ENCODE measurements at regions of chr20 and their contacts with region 1.

Region 1: GRCh38 chr20:18632196-18633009 is 44.5 kb downstream of the DTD1 start:
- DNase-seq: peak; percentile 9 to 38
- ATAC-seq: peak; percentile 66 to 75
- H3K4me3 ChIP-seq: no peak overlapping the region
- H3K27ac ChIP-seq: no peak overlapping the region
- H3K4me1 ChIP-seq: peaks cover 0 to 3% of the 10 kb centered on the region in 2 donors
- H3K27me3 ChIP-seq: no peaks in the 10 kb centered on the region
- CTCF ChIP-seq: peak; percentile 64 to 87 (median 73)
- POLR2A ChIP-seq: no peak

Region 2: DNA sequence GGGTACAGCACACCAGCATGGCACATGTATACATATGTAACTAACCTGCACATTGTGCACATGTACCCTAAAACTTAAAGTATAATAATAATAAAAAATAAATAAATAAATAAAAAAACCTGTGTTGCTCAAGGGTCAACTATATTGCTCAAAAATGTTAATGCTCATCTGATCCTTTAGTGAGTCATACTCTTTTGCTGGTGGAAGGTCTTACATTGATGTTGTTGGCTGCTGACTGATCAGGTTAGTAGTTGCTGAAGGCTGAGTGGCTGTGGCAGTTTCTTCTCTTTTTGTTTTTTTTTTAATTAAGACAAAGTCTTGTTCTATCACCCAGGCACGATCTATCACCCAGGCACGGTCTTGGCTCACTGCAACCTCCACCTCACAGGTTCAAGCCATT is 94.8 kb before region 1 on chr20:
- in situ Hi-C with region 1: no loop called
- intact Hi-C with region 1: no loop called
- DNase-seq: no peak
- ATAC-seq: no peak
- H3K4me3 ChIP-seq: no peak overlapping the region
- H3K27ac ChIP-seq: no peak overlapping the region
- H3K4me1 ChIP-seq: no peaks in the 10 kb centered on the region
- H3K27me3 ChIP-seq: no peaks in the 10 kb centered on the region
- CTCF ChIP-seq: no peak
- POLR2A ChIP-seq: no peak

Region 3: DNA sequence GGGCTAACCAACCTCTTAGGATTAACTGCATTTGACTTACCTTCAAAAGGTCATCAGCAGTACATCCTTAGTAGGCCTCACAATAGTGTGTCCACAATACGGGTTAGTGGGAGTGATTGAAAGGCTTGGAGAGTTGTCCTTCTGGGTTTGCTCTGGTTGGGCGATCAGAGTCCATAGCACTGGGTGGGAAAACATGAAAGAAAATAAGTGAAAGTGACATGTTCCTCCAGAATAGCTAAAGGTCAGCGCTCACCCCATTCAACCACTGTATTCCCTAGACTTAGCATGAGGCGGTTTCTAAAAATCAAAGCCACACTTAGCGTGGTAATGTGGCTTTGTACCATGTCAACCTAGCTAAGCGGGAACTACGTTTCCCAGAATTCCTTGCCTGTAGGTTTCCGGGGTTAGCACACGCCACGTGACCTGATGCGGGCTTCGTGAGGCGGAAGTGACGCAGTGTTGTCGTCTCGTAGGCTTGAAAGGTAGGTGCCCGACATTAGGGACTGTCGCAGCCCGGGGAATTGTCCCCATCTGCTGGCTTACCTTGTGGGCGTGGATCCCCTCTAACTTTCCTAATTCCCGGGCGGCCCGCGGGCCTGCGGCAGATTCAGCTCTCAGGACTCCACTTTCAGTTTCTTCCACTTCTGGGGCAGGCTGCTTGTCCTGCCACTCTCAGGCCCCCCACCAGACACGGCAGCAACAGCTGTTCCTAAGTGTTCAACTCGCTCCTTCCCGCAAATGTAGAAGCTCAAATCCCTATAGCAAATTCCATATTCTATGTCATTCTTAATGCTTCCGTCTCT is 161.4 kb after region 1 on chr20:
- in situ Hi-C with region 1: no loop called
- intact Hi-C with region 1: loop called (anchors 5 kb)
- DNase-seq: peak; percentile 82 to 88
- ATAC-seq: peak; percentile 99 to 100
- H3K4me3 ChIP-seq: peak overlapping the region; percentile 82 to 87 (median 85)
- H3K27ac ChIP-seq: peak overlapping the region; percentile 91 to 96 (median 92)
- H3K4me1 ChIP-seq: peaks cover 17 to 18% of the 10 kb centered on the region in 2 donors
- H3K27me3 ChIP-seq: no peaks in the 10 kb centered on the region
- CTCF ChIP-seq: peak in 1 of 5 experiments; percentile 17
- POLR2A ChIP-seq: peak; percentile 58 to 66

Region 4: DNA sequence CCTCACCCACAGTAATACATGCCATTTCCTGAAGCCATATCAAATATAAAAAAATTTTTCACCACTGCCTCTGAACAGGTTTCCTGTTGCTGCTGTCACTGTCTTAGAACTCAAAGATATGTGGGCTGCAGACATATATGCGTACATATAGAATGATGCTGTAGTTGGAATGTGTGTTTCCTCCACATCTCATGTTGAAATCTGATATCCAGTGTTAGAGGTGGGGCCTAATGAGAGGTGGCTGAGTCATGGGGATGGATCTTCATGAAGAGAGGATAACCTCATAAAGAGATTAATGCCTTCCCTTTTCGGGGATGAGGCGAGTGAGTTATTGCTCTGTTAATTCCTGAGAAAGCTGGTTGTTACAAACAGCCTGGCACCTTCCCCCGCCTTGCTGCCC is 173.5 kb after region 1 on chr20:
- in situ Hi-C with region 1: no loop called
- intact Hi-C with region 1: no loop called
- DNase-seq: no peak
- ATAC-seq: no peak
- H3K4me3 ChIP-seq: no peak overlapping the region
- H3K27ac ChIP-seq: no peak overlapping the region
- H3K4me1 ChIP-seq: no peaks in the 10 kb centered on the region
- H3K27me3 ChIP-seq: no peaks in the 10 kb centered on the region
- CTCF ChIP-seq: no peak
- POLR2A ChIP-seq: no peak

Region 5: DNA sequence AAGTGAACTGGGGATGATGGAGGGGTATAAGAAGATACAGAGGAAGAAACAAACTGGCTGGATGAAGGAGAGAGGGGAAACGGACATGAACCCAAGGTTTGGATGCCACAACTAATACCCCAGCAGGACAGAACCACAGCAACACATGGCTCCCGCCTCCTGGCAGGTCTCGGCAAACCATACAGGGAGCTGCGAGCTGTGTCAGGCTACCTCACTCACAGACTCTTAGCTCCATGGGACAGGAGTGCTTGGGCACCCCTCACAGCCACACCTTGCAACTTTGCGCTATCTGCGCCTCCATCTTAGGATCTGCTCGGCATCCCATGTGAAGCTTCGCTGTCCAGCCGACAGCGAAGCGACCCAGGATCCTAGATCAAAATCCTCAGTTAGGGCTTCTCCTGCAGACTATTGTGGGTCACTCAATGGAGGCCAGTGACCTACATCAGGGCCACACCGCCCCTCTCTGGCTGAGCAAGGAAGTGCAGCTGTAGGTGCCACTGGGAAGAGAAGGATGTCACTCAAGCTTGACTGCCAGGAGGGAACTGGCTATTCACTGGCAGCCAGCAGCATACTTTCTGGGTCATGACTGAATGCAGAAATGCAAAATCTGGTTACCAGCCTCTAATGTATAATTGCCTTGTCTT is 951.3 kb after region 1 on chr20:
- in situ Hi-C with region 1: no loop called
- intact Hi-C with region 1: loop called (anchors 10 kb)
- DNase-seq: peak; percentile 24 to 73
- ATAC-seq: peak; percentile 81 to 95
- H3K4me3 ChIP-seq: no peak overlapping the region
- H3K27ac ChIP-seq: no peak overlapping the region
- H3K4me1 ChIP-seq: no peaks in the 10 kb centered on the region
- H3K27me3 ChIP-seq: no peaks in the 10 kb centered on the region
- CTCF ChIP-seq: peak; percentile 74 to 89 (median 80)
- POLR2A ChIP-seq: no peak